Activated naive CD4-positive, alpha-beta T cell treated with anti-CD3 and anti-CD28 coated beads for 36 hours (primary cell): ENCODE measurements at regions of chr22 and their contacts with region 1.

Region 1: GRCh38 chr22:40177738-40178416 is at the start of gene TNRC6B:
- DNase-seq: peak; percentile 88
- H3K4me3 Mint-ChIP-seq: peak within 1 kb of the TSS; percentile 69
- H3K27ac Mint-ChIP-seq: peak within 1 kb of the TSS; percentile 97
- H3K4me1 Mint-ChIP-seq: peaks cover 49% of the 10 kb centered on the region
- H3K27me3 Mint-ChIP-seq: no peaks in the 10 kb centered on the region
- total RNA-seq, gene TNRC6B: 37.9 TPM

Region 2: DNA sequence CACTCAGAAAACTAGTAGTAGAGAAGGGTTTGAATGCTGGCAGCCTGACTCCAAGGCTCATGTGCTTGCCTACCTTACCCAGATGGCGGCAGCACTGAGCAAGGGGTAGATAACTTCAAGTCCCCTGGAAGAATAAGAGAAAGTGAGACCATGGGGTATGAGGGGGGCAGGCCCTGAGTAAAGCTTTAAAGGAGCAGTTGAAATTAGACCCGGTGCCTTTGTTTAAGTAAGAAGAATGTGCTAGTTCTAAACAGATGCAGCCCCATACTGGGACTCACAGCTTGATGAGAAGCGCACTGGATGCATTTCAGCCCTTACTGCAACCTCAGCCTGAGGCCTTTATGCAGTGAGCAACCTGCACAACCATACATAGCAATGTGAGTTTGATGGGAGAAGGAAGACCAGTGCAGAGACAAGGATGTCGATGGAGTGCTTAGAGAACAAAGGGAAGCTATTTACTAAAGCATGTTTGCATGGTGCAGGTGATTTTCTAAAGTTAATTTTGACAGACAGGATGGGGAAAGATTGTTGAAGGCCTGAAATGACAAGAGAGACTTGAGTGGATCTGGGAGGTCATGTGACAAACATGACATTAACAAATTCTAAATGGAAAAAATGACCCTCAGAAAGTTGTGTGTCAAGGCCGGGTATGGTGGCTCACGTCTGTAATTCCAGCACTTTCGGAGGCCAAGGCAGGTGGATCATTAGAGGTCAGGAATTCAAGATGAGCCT is 244.8 kb before region 1 on chr22:
- CTCF ChIA-PET with region 1: no interaction called
- intact Hi-C with region 1: loop called (anchors 5 kb)
- DNase-seq: peak; percentile 81
- H3K4me3 Mint-ChIP-seq: peak overlapping the region; percentile 78
- H3K27ac Mint-ChIP-seq: no peak overlapping the region
- H3K4me1 Mint-ChIP-seq: peaks cover 48% of the 10 kb centered on the region
- H3K27me3 Mint-ChIP-seq: no peaks in the 10 kb centered on the region

Region 3: GRCh38 chr22:40055143-40055883 is 122.6 kb before region 1 on chr22:
- CTCF ChIA-PET with region 1: interaction called, 6 read pairs
- intact Hi-C with region 1: loop called (anchors 1 kb)
- DNase-seq: peak; percentile 28
- H3K4me3 Mint-ChIP-seq: peak overlapping the region; percentile 69
- H3K27ac Mint-ChIP-seq: peak overlapping the region; percentile 95
- H3K4me1 Mint-ChIP-seq: peaks cover 80% of the 10 kb centered on the region
- H3K27me3 Mint-ChIP-seq: no peaks in the 10 kb centered on the region

Region 4: DNA sequence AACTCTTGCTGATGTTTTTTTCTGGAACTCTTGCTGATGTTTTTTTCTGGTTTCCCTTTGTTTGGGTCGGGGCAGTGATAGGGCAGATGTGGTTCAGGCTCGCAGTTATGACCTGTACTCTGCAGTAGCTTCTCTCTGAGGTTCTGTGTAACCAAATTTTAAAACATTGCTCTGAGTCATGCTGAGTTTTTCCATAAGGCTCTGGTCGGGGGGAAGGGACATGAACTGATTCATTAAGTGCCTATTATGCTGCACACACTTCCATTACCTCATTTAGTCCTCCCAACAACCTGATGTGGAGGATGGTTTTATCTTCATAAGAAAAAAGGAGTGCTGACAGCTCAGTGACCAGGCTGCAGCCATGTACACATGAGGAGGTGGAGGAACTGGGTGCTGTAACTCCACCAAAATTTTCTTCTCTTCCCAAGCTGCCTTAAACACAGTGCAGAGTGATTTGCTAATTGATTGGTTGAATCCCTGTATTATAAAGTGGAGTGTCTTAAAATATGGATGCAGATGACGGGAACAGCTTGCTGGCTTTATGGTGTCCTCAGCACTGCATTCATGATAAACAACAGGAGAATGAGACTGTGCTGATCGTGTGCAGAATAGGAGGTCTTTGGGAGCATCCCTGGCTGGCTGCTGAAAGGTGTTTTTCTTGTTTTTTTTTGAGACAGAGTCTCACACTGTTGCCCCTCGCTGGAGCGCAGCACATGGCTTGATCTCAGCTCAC is 18.9 kb after region 1 on chr22:
- CTCF ChIA-PET with region 1: interaction called, 7 read pairs
- intact Hi-C with region 1: loop called (anchors 1 kb)
- DNase-seq: peak; percentile 80
- H3K4me3 Mint-ChIP-seq: no peak overlapping the region
- H3K27ac Mint-ChIP-seq: peak overlapping the region; percentile 84
- H3K4me1 Mint-ChIP-seq: peaks cover 81% of the 10 kb centered on the region
- H3K27me3 Mint-ChIP-seq: no peaks in the 10 kb centered on the region

Region 5: DNA sequence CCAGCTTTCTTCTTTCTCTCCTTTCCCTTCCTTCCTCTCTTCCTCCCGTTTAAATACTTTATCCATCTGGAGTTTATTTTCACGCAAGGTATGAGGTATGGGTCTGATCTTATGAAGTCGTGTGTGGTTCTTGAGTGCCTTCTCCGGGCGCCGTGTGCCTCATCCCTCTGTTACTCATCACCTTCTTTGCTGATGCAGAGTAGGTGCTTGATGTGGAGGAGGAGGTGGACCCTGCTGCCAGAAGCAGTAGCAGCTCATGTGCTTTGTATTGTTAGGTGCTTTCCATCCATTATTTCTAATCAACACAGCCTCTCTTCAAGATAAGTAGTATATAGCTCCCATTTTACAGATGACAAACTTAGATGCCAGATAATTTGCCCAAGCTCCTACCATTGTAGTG is 46.8 kb after region 1 on chr22:
- CTCF ChIA-PET with region 1: interaction called, 3 read pairs
- intact Hi-C with region 1: loop called (anchors 1 kb)
- DNase-seq: peak; percentile 79
- H3K4me3 Mint-ChIP-seq: peak overlapping the region; percentile 61
- H3K27ac Mint-ChIP-seq: peak overlapping the region; percentile 83
- H3K4me1 Mint-ChIP-seq: peaks cover 57% of the 10 kb centered on the region
- H3K27me3 Mint-ChIP-seq: no peaks in the 10 kb centered on the region

Region 6: GRCh38 chr22:40289991-40290459 is 112.1 kb after region 1 on chr22:
- CTCF ChIA-PET with region 1: no interaction called
- intact Hi-C with region 1: loop called (anchors 1 kb)
- DNase-seq: peak; percentile 86
- H3K4me3 Mint-ChIP-seq: peak overlapping the region; percentile 68
- H3K27ac Mint-ChIP-seq: peak overlapping the region; percentile 95
- H3K4me1 Mint-ChIP-seq: peaks cover 67% of the 10 kb centered on the region
- H3K27me3 Mint-ChIP-seq: no peaks in the 10 kb centered on the region

Region 7: GRCh38 chr22:40346178-40347118 is 168.6 kb after region 1 on chr22 and contains the start of gene ADSL:
- CTCF ChIA-PET with region 1: interaction called, 4 read pairs
- intact Hi-C with region 1: loop called (anchors 1 kb)
- DNase-seq: peak; percentile 91
- H3K4me3 Mint-ChIP-seq: peak within 1 kb of the TSS; percentile 94
- H3K27ac Mint-ChIP-seq: peak within 1 kb of the TSS; percentile 96
- H3K4me1 Mint-ChIP-seq: peaks cover 46% of the 10 kb centered on the region
- H3K27me3 Mint-ChIP-seq: no peaks in the 10 kb centered on the region
- total RNA-seq, gene ADSL: 125 to 129 TPM